HEK293 (cell line): ENCODE measurements at regions of chr19 and their contacts with region 1.

Region 1: DNA sequence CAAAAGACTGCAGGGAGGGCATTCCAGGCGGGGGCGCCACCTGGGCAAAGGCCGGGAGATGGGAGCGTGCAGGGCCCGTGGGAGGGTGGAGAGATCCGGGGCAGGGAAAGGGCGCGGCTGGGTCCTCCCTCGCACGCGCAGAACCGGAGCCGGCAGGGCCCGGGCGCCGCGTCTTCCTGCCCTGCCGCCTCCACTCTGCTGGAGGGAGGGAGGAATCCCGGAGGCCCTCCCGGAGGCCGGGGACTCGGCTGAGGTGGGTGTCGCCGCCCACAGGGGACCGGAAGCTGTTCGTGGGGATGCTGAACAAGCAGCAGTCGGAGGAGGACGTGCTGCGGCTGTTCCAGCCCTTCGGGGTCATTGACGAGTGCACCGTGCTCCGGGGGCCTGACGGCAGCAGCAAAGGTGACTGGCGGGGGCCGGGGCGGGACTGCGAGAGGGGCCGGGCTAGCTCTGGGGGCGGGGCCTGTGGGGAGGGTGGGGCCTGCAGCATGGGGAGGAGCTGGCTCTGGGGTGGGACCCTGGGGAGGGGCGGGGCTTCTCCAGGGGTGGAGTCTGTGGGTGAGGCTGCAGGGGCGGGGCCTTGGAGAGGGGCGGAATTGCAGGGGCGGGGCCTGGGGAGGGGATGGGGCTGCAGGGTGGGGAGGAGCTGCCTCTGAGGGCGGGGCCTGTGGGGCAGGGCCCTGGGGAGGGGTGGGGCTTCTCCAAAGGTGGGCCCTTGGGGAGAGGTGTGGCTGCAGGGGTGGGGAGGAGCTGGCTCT is 51.3 kb downstream of the CELF5 start:
- H3K4me3 ChIP-seq: peak overlapping the region; percentile 55
- H3K27ac ChIP-seq: no peak overlapping the region; the same call in 1 of the 2 replicates
- H3K4me1 ChIP-seq: no peaks in the 10 kb centered on the region
- CTCF ChIP-seq: peak; percentile 98

Region 2: DNA sequence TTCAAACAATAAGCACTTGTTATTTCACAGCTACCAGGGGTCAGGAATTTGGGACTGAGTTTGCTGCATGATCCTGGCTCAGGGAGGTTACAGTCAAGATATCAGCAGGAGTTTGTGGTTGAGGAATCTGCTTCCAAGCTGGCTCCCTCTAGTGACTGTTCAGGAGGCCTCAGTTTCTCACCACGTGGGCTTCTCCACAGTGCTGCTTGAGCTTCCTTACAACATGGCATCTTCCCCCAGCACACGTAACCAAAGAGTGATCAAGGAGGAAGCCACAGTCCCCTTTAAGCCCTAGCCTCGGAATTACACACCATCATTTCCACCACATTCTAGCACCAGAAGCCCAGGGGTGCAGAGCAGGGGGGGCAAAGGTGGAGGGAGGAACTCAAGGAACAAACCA is 22.5 kb before region 1 on chr19:
- CTCF ChIA-PET with region 1: interaction called, 19 read pairs
- POLR2A ChIA-PET with region 1: interaction called, 3 read pairs
- H3K4me3 ChIP-seq: no peak overlapping the region
- H3K27ac ChIP-seq: no peak overlapping the region
- H3K4me1 ChIP-seq: no peaks in the 10 kb centered on the region
- CTCF ChIP-seq: no peak

Region 3: DNA sequence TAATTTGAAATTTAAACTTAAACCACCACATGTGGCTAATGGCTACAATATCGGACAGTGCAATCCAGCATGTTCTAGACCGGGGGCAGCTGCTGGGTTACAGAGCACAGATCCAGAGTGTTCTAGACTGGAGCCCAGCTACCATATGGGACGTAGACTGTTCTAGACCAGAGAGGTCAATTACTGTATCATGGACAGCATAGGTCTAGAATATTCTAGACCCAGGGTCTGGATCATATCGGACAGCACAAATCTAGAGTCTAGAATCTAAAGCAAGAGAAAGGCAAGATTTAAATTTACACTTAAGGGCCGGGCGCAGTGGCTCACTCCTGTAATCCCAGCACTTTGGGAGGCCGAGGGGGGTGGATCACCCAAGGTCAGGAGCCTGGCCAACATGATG is 13.4 kb before region 1 on chr19:
- CTCF ChIA-PET with region 1: interaction called, 10 read pairs
- POLR2A ChIA-PET with region 1: interaction called, 5 read pairs
- H3K4me3 ChIP-seq: no peak overlapping the region
- H3K27ac ChIP-seq: no peak overlapping the region
- H3K4me1 ChIP-seq: peaks cover 2% of the 10 kb centered on the region; the same call in 1 of the 2 replicates
- CTCF ChIP-seq: no peak

Region 4: GRCh38 chr19:3289971-3290569 is 14.3 kb after region 1 on chr19:
- CTCF ChIA-PET with region 1: interaction called, 28 read pairs
- POLR2A ChIA-PET with region 1: interaction called, 60 read pairs
- H3K4me3 ChIP-seq: no peak overlapping the region; the same call in 1 of the 2 replicates
- H3K27ac ChIP-seq: no peak overlapping the region
- H3K4me1 ChIP-seq: no peaks in the 10 kb centered on the region
- CTCF ChIP-seq: no peak

Region 5: DNA sequence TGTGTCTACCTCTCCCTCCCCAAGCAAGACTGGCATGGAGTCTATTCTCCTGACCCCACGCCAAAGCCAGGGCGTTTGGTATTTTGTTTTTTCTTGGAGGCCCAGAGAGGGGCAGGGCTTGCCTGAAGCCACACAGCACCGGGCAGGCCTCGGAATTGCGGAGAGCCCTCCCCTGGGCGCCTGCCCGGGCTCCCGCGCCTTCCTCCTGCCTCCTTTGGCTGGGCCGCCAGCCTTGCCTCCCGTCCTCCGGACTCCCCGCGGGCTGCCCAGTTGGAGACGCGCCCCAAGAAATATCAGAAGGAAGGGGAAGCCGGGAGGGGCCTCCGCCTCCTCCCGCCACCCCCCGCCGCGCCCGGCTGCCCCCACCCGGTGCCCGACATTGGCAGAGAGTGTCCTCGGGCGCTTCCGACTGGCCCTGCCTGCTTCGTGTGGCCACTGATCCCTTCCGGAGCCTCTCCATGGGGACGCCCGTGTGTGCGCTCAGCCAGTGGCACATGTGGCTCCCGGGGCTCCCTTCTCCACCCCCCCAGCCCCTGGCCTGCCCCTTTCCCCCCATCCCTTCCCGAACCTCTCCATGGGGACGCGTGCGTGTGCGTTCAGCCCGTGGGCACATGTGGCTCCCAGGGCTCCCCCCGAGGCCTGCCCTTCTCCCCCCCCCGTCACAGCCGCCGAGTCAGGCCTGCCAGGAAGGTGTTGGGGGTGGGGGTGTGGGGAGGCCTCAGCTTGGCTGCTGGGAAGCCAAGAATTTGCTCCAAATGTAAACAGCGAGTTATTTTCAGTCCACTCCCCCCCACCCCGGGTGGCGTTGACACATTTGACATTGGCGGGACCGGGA is 127.9 kb after region 1 on chr19:
- CTCF ChIA-PET with region 1: no interaction called
- POLR2A ChIA-PET with region 1: no interaction called
- H3K4me3 ChIP-seq: no peak overlapping the region
- H3K27ac ChIP-seq: no peak overlapping the region
- H3K4me1 ChIP-seq: no peaks in the 10 kb centered on the region
- CTCF ChIP-seq: no peak